Naive thymus-derived CD4-positive, alpha-beta T cell (primary cell): ENCODE measurements at regions of chrX and their contacts with region 1.

Region 1: DNA sequence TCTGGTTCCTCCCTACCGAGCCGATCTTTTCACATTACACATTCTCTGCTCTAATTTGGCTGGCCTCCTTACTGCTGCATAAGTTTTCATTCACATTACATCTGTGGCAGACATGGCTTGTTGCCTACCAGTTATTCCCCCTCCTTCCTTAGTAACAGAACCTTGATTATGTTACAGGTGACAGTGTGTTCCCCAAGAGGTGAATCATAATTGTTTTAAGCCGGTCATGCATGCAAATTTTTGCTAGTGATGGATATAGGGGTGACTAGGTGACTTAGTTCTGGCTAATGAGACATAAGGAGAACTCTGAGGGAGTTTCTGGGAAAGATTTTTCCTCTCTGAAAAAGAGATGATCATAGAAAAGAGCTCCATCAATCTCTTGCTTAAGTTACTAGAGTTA is 8.4 kb upstream of the LAMP2 start:
- DNase-seq: no peak
- ATAC-seq: no peak
- H3K4me3 ChIP-seq: no peak overlapping the region
- H3K4me3 Mint-ChIP-seq: no peak overlapping the region
- H3K27ac ChIP-seq: no peak overlapping the region
- H3K27ac Mint-ChIP-seq: no peak overlapping the region
- H3K4me1 ChIP-seq: no peaks in the 10 kb centered on the region
- H3K4me1 Mint-ChIP-seq: peaks cover 0 to 5% (median 0%) of the 10 kb centered on the region in 7 donors
- H3K27me3 ChIP-seq: no peaks in the 10 kb centered on the region
- H3K27me3 Mint-ChIP-seq: no peaks in the 10 kb centered on the region

Region 2: DNA sequence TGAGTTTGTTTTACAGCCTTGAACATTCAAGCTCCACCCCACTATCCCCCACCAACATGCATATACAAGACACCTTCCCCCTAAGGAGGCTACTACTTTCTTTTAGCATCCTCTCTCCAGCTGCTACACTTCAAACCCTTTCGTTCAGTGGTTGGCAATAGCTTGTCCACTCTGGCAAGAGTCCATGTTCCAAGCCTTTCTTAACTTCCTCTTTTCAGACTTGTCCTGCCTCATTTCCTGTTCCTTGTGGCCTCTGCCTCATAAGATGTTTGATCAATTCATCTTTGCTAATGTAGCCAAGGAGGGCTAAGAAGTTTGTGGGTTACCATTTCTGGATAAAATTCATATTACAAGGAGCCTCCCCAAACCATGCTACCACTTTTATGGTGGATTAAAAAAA is 1674.6 kb before region 1 on chrX:
- CTCF ChIA-PET with region 1: no interaction called
- POLR2A ChIA-PET with region 1: no interaction called
- intact Hi-C with region 1: no loop called
- DNase-seq: no peak
- ATAC-seq: no peak
- H3K4me3 ChIP-seq: no peak overlapping the region
- H3K4me3 Mint-ChIP-seq: no peak overlapping the region
- H3K27ac ChIP-seq: no peak overlapping the region
- H3K27ac Mint-ChIP-seq: peak overlapping the region in 1 of 9 donors; percentile 56
- H3K4me1 ChIP-seq: no peaks in the 10 kb centered on the region
- H3K4me1 Mint-ChIP-seq: peaks cover 0 to 2% (median 0%) of the 10 kb centered on the region in 7 donors
- H3K27me3 ChIP-seq: no peaks in the 10 kb centered on the region
- H3K27me3 Mint-ChIP-seq: peaks cover 0 to 14% (median 5%) of the 10 kb centered on the region in 5 donors

Region 3: DNA sequence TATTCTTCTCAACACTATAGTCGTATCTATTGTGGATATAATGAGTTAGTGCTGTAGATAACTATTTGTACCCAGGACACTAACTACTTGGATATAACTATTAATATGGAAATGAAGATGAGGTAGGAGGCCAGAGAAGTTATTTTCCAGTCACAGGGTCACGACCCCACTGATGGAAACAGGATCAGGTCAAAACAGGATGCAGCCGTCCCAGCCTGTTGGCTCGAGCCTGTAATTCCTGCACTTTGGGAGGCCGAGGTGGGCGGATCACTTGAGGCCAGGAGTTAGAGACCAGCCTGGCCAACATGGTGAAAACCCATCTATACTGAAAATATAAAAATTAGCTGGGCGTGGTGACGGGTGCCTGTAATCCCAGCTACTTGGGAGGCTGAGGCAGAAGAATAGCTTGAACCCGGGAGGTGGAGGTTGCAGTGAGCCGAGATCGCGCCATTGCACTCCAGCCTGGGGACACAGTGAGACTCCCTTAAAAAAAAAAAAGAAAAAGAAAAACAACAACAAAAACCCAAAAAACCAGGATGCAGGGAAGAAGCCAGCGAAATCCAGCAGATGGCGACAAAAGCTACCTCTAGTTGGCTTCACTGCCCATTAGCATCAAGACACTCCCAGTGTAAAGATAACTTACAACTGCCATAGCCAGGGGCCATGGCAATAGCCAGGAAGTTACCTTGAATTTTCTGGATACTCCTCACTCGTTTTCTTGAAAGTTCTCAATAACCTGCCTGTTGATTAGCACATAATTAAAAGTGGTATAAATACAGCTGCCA is 496.0 kb before region 1 on chrX:
- CTCF ChIA-PET with region 1: no interaction called
- POLR2A ChIA-PET with region 1: no interaction called
- intact Hi-C with region 1: no loop called
- DNase-seq: no peak
- ATAC-seq: no peak
- H3K4me3 ChIP-seq: no peak overlapping the region
- H3K4me3 Mint-ChIP-seq: no peak overlapping the region
- H3K27ac ChIP-seq: no peak overlapping the region
- H3K27ac Mint-ChIP-seq: no peak overlapping the region
- H3K4me1 ChIP-seq: no peaks in the 10 kb centered on the region
- H3K4me1 Mint-ChIP-seq: no peaks in the 10 kb centered on the region
- H3K27me3 ChIP-seq: no peaks in the 10 kb centered on the region
- H3K27me3 Mint-ChIP-seq: peaks cover 9 to 19% (median 18%) of the 10 kb centered on the region in 5 donors

Region 4: GRCh38 chrX:120316589-120317283 is 160.7 kb before region 1 on chrX:
- CTCF ChIA-PET with region 1: no interaction called
- POLR2A ChIA-PET with region 1: no interaction called
- intact Hi-C with region 1: loop called in 1 of 2 experiments (anchors 1 kb)
- DNase-seq: no peak
- ATAC-seq: no peak
- H3K4me3 ChIP-seq: no peak overlapping the region
- H3K4me3 Mint-ChIP-seq: no peak overlapping the region
- H3K27ac ChIP-seq: no peak overlapping the region
- H3K27ac Mint-ChIP-seq: no peak overlapping the region
- H3K4me1 ChIP-seq: no peaks in the 10 kb centered on the region
- H3K4me1 Mint-ChIP-seq: peaks cover 0 to 3% (median 0%) of the 10 kb centered on the region in 7 donors
- H3K27me3 ChIP-seq: no peaks in the 10 kb centered on the region
- H3K27me3 Mint-ChIP-seq: peaks cover 5 to 58% (median 28%) of the 10 kb centered on the region in 5 donors

Region 5: DNA sequence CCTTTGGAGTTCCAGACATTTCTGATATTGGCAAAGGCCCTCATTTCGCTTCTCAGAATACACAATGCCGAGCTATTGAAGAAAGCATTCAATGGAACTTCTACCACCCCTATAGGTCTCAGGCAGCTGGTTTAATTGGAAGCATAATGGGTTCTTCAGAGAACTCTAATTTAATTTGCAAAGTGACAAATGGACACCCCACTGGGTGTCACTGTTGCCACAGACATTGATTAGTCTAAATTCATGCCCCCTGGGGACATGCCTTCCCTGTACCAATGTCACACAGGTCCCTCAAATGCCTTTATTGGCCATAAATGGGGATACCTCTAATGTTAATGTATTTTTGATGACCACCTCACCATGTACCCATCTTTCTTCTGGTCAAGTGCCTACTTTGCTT is 143.3 kb before region 1 on chrX:
- CTCF ChIA-PET with region 1: no interaction called
- POLR2A ChIA-PET with region 1: no interaction called
- intact Hi-C with region 1: loop called in 1 of 2 experiments (anchors 1 kb)
- DNase-seq: peak in 1 of 9 donors; percentile 5
- ATAC-seq: no peak
- H3K4me3 ChIP-seq: no peak overlapping the region
- H3K4me3 Mint-ChIP-seq: no peak overlapping the region
- H3K27ac ChIP-seq: no peak overlapping the region
- H3K27ac Mint-ChIP-seq: no peak overlapping the region
- H3K4me1 ChIP-seq: no peaks in the 10 kb centered on the region
- H3K4me1 Mint-ChIP-seq: peaks cover 0 to 1% (median 0%) of the 10 kb centered on the region in 7 donors
- H3K27me3 ChIP-seq: no peaks in the 10 kb centered on the region
- H3K27me3 Mint-ChIP-seq: peaks cover 0 to 7% (median 0%) of the 10 kb centered on the region in 5 donors

Region 6: GRCh38 chrX:120365320-120365719 is 112.1 kb before region 1 on chrX:
- CTCF ChIA-PET with region 1: no interaction called
- POLR2A ChIA-PET with region 1: no interaction called
- intact Hi-C with region 1: loop called in 1 of 2 experiments (anchors 1 kb)
- DNase-seq: peak in 7 of 9 donors; percentile 5 to 28 (median 14)
- ATAC-seq: peak; percentile 60
- H3K4me3 ChIP-seq: no peak overlapping the region
- H3K4me3 Mint-ChIP-seq: no peak overlapping the region
- H3K27ac ChIP-seq: no peak overlapping the region
- H3K27ac Mint-ChIP-seq: no peak overlapping the region
- H3K4me1 ChIP-seq: no peaks in the 10 kb centered on the region
- H3K4me1 Mint-ChIP-seq: no peaks in the 10 kb centered on the region
- H3K27me3 ChIP-seq: no peaks in the 10 kb centered on the region
- H3K27me3 Mint-ChIP-seq: peaks cover 0 to 4% (median 0%) of the 10 kb centered on the region in 5 donors

Region 7: DNA sequence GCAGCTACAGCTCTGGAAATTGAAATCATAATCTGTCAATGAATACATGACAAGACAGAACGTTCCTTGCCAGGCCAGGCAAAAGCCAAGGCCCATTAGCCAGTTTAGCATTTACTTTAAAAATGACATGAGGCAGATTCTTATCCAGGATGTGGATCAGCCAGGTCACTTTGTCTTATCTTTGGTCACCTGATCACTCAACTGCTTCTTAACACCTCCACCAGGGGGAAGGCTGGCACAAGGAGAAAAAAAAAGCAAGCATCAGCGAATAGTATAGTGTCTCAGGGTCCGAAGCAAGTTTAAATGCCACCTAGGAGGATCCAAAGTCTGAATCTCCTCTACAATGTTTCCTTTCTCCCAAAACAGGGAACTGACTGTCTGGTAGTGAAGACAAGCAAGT is 96.8 kb before region 1 on chrX:
- CTCF ChIA-PET with region 1: interaction called, 10 read pairs
- POLR2A ChIA-PET with region 1: interaction called, 3 read pairs
- intact Hi-C with region 1: loop called (anchors 1 kb)
- DNase-seq: peak in 7 of 9 donors; percentile 13 to 66 (median 54)
- ATAC-seq: peak; percentile 80
- H3K4me3 ChIP-seq: no peak overlapping the region
- H3K4me3 Mint-ChIP-seq: no peak overlapping the region
- H3K27ac ChIP-seq: no peak overlapping the region
- H3K27ac Mint-ChIP-seq: peak overlapping the region in 2 of 9 donors; percentile 23 to 57
- H3K4me1 ChIP-seq: peaks cover 0 to 4% of the 10 kb centered on the region in 2 donors
- H3K4me1 Mint-ChIP-seq: peaks cover 0 to 6% (median 4%) of the 10 kb centered on the region in 7 donors
- H3K27me3 ChIP-seq: no peaks in the 10 kb centered on the region
- H3K27me3 Mint-ChIP-seq: peaks cover 0 to 12% (median 4%) of the 10 kb centered on the region in 5 donors